ENCODE measurements at regions of chr12 and their contacts with region 1.

Region 1: GRCh38 chr12:114166362-114166761 is 200.2 kb upstream of the RBM19 start:
- DNase-seq: peak in 1 of 2 donors; percentile 51
- ATAC-seq: no peak
- H3K4me3 ChIP-seq: no peak overlapping the region
- H3K27ac ChIP-seq: no peak overlapping the region
- H3K4me1 ChIP-seq: no peaks in the 10 kb centered on the region
- H3K27me3 ChIP-seq: no peaks in the 10 kb centered on the region

Region 2: DNA sequence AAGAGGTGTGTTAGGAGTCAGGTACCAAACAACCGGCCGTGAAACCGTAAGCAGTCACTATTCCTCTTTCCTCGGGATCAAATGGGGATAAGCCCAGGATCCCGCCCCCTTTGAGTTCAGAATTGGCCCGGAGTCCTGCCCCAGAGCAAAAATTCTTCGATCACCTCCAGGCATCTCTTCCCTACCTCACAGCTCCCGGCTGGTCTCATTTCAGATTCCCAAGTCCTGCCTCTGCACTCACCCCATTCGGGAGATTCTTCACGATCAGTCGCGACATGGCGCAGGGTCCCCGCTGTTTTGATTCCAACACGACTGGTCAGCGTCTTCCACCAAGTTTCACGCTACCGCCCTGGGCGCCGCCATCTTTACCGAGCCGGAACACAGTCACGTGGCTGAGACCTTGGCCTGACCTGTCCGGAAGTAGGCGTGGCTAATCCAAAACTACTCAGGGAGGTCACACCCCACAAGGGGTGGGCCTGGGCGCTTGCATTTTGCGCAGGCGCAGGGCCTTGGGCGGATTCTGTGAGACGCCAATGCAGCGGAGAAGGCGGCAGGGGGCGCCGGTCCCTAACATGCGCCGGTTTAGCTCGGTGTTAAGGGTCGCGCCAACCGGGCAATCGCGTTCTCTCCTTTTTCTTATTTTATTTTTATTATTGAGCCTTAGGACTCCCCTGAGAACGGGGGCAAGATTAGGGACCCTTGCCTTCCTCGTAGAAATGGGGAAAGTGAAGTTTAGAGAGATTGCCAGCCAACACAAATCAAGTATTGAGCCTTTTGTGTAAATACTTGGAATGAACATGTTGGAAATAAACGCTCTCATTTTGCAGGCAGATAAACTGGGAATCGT is 200.2 kb before region 1 on chr12 and contains the start of gene RBM19:
- intact Hi-C with region 1: no loop called
- DNase-seq: peak; percentile 98 to 99
- ATAC-seq: peak; percentile 100
- H3K4me3 ChIP-seq: peak within 1 kb of the TSS; percentile 69 to 92
- H3K27ac ChIP-seq: peak within 1 kb of the TSS in 1 of 2 donors; percentile 25
- H3K4me1 ChIP-seq: no peaks in the 10 kb centered on the region
- H3K27me3 ChIP-seq: no peaks in the 10 kb centered on the region
- total RNA-seq, gene RBM19: 30.3 to 31.8 TPM

Region 3: DNA sequence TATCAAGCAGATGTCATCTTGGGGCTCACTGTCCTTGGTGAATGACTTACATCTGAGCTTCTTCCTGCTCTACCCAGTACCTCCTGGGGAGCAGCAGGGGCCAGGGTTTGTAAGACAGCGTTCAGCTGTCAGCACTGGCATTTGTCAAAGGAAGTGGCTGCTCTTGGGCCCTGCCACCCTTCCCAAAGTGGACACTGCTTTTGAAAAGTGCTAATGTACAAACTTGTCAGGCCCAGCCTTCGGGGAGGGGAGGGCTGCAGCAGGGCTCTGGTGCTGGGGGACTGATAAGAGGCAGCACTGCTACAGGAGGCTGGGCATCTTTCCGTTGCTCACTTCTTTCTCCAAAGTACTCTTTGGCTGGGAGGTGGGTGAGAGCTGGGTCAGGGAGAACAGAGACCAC is 140.4 kb before region 1 on chr12:
- intact Hi-C with region 1: no loop called
- DNase-seq: no peak
- ATAC-seq: no peak
- H3K4me3 ChIP-seq: no peak overlapping the region
- H3K27ac ChIP-seq: no peak overlapping the region
- H3K4me1 ChIP-seq: no peaks in the 10 kb centered on the region
- H3K27me3 ChIP-seq: no peaks in the 10 kb centered on the region

Region 4: DNA sequence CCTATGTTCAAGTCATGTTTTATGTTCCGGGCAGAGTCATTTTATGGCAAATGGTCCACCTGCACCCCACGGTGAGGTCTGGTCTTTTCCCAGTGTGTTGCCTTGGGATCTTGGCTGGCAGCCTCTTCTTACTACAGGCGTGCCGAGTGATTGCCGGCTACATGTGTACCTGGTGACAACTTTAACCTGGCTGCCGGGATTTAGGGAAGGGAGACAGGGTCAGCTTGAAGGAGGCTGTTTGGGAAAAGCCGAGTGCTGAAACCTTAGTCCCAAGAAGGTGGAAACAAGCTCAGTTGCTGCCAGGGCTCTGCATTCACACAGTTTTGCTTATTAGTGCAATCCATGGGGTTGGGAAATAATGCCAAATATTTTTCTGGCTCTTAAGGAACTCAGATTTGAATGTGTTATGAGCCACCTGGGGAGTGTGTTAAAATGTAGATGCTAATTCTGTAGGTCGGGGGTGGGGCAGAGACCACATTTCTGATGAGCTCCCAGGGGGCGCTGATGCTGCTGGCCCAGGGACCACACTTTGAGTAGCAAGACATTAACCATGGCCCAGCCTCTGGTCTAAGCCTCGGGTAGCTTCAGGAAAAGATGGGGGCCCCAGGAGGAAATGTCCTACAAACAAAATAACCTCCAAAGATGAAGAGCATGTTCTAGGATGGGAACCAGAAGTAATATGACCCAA is 60.0 kb after region 1 on chr12:
- intact Hi-C with region 1: no loop called
- DNase-seq: no peak
- ATAC-seq: no peak
- H3K4me3 ChIP-seq: no peak overlapping the region
- H3K27ac ChIP-seq: no peak overlapping the region
- H3K4me1 ChIP-seq: no peaks in the 10 kb centered on the region
- H3K27me3 ChIP-seq: no peaks in the 10 kb centered on the region

Region 5: DNA sequence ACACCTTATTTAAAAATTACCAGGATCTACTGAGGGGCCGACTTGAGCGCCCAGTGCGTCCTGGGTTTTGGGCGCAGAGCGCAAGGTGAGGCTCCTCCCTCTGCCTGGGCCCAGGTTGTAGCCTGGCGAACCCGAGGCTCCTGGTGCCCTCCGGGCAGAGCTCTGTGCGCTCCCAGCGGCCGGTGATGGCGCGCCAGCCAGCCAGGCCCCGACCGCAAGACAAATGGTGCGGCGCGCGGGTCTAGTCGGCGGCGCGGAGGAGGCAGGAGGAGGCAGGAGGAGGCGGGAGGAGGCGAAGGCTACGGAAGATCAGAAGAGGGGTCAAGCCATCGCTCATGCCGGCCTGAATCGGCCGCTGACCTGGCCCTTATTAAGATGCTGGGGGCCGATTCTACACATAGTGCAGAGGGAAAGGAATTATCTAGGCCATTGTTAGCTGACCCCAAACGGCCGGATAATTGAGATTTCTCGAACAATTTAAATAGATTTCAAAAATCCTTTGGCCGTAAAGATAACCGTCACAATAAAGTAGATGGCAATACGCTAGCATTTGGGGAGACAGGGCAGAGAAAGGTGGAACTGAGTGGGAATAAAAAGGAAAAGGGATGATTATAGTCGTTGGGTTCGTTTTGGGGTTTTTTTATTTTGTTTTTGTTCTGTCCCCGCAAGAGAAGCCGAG is 236.8 kb after region 1 on chr12:
- intact Hi-C with region 1: loop called in 1 of 2 experiments (anchors 10 kb)
- DNase-seq: no peak
- ATAC-seq: no peak
- H3K4me3 ChIP-seq: no peak overlapping the region
- H3K27ac ChIP-seq: no peak overlapping the region
- H3K4me1 ChIP-seq: no peaks in the 10 kb centered on the region
- H3K27me3 ChIP-seq: peaks cover 0 to 2% of the 10 kb centered on the region in 2 donors

Region 6: GRCh38 chr12:114476159-114476558 is 309.8 kb after region 1 on chr12:
- intact Hi-C with region 1: loop called (anchors 1 to 10 kb)
- DNase-seq: no peak
- ATAC-seq: no peak
- H3K4me3 ChIP-seq: no peak overlapping the region
- H3K27ac ChIP-seq: no peak overlapping the region
- H3K4me1 ChIP-seq: no peaks in the 10 kb centered on the region
- H3K27me3 ChIP-seq: no peaks in the 10 kb centered on the region

Region 7: DNA sequence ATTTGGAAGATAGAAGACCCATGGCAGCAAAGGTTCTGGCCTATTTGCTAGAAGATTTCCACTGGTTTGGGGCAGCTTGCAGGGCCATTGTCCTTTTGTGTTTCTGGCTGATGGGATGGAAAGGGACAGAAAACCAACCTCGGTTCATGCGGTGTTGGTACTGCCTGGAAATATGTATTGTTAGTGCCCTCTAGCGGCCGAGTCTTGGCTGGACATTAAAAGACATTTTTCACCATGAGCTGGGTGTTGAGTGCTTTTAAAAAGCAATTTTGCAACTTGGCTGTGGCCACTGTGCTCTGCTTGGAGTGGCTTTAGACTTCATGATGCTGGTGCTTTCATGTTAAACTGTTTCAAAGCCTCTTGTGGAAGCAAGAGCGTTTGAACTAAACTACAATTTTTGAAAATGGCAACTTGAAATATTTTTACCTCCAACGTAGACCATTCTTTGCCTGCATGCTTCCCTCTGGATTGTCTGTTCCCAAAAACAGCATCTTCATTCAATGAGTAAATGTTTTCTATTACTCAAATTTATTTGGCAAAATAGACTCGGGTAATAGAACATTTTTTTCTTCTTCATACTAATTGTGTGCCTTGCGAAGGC is 342.3 kb after region 1 on chr12:
- intact Hi-C with region 1: loop called (anchors 2 to 5 kb)
- DNase-seq: peak; percentile 68 to 79
- ATAC-seq: peak; percentile 65
- H3K4me3 ChIP-seq: no peak overlapping the region
- H3K27ac ChIP-seq: no peak overlapping the region
- H3K4me1 ChIP-seq: no peaks in the 10 kb centered on the region
- H3K27me3 ChIP-seq: no peaks in the 10 kb centered on the region

Measured in aorta (tissue), 5 donors.